PC-3 (cell line): ENCODE measurements at regions of chr17 and their contacts with region 1.

Region 1: GRCh38 chr17:7484067-7484918 is at the start of gene POLR2A:
- DNase-seq: peak; percentile 96
- ATAC-seq: peak; percentile 60
- H3K4me3 ChIP-seq: peak within 1 kb of the TSS; percentile 76
- H3K27ac ChIP-seq: peak within 1 kb of the TSS; percentile 94
- H3K4me1 ChIP-seq: peaks cover 23% of the 10 kb centered on the region
- H3K27me3 ChIP-seq: no peaks in the 10 kb centered on the region
- CTCF ChIP-seq: no peak
- total RNA-seq, gene POLR2A: 47.1 and 95.7 TPM in 2 replicates

Region 2: DNA sequence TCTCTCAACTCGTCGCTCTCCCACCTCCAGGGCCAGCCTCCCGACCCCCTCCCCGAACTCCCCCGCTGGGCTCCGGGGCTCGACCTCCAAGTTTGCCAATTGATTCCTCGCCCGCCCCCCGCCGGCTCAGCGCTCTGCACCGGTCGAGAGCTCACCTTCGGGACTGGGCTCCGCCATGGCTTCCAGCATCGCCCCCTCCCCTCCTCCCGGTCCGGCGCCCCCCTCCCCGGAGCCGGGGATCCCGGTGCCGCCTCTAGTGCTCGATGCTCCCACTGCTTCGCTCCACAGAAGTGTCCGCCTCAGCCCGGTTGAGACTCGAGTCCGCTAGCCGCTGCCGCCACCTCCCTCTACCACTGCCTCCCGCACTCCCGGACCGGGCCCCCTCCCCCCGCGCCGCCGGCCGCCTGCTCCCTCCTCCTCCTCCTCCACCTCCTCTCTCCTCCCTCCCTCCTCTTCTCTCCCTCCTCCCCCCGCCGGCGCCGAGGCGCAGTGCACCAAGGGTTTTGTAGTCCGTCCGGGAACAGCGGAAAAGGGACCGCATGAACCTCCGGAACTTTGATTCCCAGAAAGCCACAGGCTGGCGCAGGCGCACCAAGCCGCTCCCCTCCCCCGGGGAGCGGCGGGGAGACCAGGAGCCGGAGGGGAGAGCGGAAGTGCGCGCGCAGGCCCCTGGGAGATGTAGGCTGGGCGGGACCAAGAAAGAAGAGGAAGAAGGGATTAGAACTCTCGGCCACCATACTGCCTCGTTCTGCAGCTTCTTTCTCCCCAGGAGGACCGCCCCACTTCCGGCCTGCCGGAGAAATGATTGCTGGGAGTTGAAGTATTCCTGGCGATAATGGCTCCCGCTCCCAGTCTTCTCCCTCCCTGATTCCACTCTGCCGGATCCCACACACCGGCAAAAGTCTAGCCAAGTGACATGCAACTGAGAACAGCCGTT is 244.9 kb before region 1 on chr17 and contains the start of gene PHF23:
- CTCF ChIA-PET with region 1: no interaction called
- POLR2A ChIA-PET with region 1: interaction called, 11 read pairs
- intact Hi-C with region 1: no loop called
- DNase-seq: peak; percentile 98
- ATAC-seq: peak; percentile 52
- H3K4me3 ChIP-seq: peak within 1 kb of the TSS; percentile 96
- H3K27ac ChIP-seq: peak within 1 kb of the TSS; percentile 32; the same call in 1 of the 2 replicates
- H3K4me1 ChIP-seq: peaks cover 40% of the 10 kb centered on the region
- H3K27me3 ChIP-seq: no peaks in the 10 kb centered on the region
- CTCF ChIP-seq: no peak
- total RNA-seq, gene PHF23: 20.8 and 32.7 TPM in 2 replicates

Region 3: GRCh38 chr17:7261172-7261927 is 222.9 kb before region 1 on chr17:
- CTCF ChIA-PET with region 1: no interaction called
- POLR2A ChIA-PET with region 1: no interaction called
- intact Hi-C with region 1: loop called (anchors 5 kb)
- DNase-seq: peak; percentile 70
- ATAC-seq: peak; percentile 5
- H3K4me3 ChIP-seq: peak overlapping the region; percentile 97
- H3K27ac ChIP-seq: peak overlapping the region; percentile 83
- H3K4me1 ChIP-seq: peaks cover 27% of the 10 kb centered on the region
- H3K27me3 ChIP-seq: no peaks in the 10 kb centered on the region
- CTCF ChIP-seq: no peak

Region 4: DNA sequence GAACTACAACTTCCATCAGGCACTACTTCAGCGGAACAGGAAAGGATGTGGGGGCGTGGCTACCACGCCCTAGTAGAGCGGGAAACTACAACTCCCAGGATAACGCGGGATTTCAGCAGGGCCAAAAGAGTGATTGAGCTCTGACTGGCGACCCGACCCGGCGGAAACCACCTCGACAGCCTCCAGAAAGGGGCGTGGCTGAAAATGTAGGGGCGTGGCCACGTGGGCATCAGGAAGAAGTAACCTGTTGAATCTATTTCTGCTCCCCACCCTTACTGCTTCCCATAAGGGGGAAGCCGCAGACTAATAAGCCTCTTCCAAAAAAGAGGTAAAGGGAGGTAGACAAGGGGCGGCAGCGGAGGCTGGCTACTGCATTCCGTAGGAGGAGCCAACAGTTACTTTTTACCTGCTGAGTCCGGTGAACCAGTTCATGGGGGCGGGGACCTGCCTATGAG is 49.0 kb before region 1 on chr17 and contains the start of gene TMEM102:
- CTCF ChIA-PET with region 1: no interaction called
- POLR2A ChIA-PET with region 1: interaction called, 3 read pairs
- intact Hi-C with region 1: loop called (anchors 1 kb)
- DNase-seq: peak; percentile 96
- ATAC-seq: peak; percentile 77
- H3K4me3 ChIP-seq: peak within 1 kb of the TSS; percentile 71
- H3K27ac ChIP-seq: peak within 1 kb of the TSS; percentile 40
- H3K4me1 ChIP-seq: peaks cover 4% of the 10 kb centered on the region; the same call in 1 of the 2 replicates
- H3K27me3 ChIP-seq: no peaks in the 10 kb centered on the region
- CTCF ChIP-seq: no peak
- total RNA-seq, gene TMEM102: 14.0 and 17.9 TPM in 2 replicates